Heart left ventricle (tissue), 16 donors: ENCODE measurements at regions of chr7 and their contacts with region 1.

Region 1: DNA sequence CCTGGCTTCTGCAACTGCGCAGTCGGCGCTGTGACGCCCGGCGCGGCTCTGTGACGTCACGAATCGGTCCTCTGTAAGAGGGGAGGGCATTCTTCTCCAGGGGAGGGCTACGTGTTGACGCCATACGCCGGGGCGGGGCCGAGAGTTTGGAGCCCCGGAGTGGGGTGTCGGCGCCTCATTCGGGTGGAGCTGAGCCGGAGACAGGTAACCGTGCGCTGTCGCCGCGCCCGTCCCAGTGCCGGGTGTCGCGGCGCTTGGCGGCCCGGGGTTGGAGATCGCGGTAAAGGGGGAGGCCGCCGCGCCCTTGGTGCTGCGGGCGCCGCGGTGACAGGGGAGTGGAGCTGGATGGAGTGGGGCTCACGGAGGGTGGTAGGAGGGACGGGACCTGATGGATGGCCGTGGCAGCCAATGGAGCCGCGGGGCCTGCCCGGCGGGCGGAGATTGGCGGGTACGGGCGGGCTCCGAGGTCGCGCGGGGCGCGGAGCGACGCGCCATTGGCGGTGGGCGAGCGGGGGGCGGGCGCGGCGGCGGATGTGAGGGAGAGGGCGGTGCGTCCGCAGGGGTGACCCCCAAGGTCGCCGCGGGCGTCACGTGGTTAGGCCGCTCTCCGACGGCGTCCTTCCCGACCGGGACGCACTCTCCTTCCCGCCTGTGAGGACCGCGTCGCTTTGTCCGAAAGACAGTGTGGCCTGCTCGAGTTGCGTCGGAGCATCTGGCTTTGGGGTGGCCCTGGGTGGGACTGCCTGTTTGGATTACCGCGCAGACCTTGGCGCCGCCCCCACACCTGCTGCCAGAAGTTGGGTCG is at the start of gene OGDH:
- DNase-seq: peak; percentile 99 to 100 (median 99)
- ATAC-seq: peak; percentile 94 to 99 (median 96)
- H3K4me3 ChIP-seq: peak within 1 kb of the TSS; percentile 47 to 93 (median 75)
- H3K27ac ChIP-seq: peak within 1 kb of the TSS; percentile 93 to 99 (median 98)
- H3K4me1 ChIP-seq: peaks cover 0 to 33% (median 23%) of the 10 kb centered on the region in 12 donors
- H3K27me3 ChIP-seq: no peaks in the 10 kb centered on the region
- CTCF ChIP-seq: no peak
- POLR2A ChIP-seq: peak; percentile 85 to 96
- total RNA-seq, gene OGDH: 394 to 789 (median 635) TPM

Region 2: GRCh38 chr7:44131173-44132029 is 475.3 kb before region 1 on chr7:
- intact Hi-C with region 1: no loop called
- DNase-seq: peak in 2 of 5 donors; percentile 38 to 63
- ATAC-seq: peak; percentile 45 to 79 (median 68)
- H3K4me3 ChIP-seq: no peak overlapping the region
- H3K27ac ChIP-seq: peak overlapping the region; percentile 1 to 89 (median 70)
- H3K4me1 ChIP-seq: peaks cover 0 to 39% (median 10%) of the 10 kb centered on the region in 12 donors
- H3K27me3 ChIP-seq: no peaks in the 10 kb centered on the region
- CTCF ChIP-seq: peak in 10 of 12 donors; percentile 22 to 52 (median 35)
- POLR2A ChIP-seq: no peak

Region 3: DNA sequence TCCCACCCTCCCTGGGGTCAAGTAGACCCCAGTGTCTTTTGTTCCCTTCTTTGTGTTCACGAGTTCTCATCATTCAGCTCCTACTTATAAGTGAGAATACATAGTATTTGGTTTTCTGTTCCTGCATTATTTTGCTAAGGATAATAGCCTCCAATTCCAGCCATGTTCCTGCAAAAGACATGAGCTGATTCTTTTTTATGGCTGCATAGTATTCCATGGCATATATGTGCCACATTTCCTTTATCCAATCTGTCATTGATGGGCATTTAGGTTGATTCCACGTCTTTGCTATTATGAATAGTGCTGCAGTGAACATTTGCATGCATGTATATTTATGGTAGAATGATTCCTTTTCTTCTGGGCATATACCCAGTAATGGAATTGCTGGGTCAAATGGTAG is 253.0 kb before region 1 on chr7:
- intact Hi-C with region 1: no loop called
- DNase-seq: no peak
- ATAC-seq: no peak
- H3K4me3 ChIP-seq: no peak overlapping the region
- H3K27ac ChIP-seq: no peak overlapping the region
- H3K4me1 ChIP-seq: peaks cover 0 to 7% (median 0%) of the 10 kb centered on the region in 12 donors
- H3K27me3 ChIP-seq: peaks cover 0 to 6% (median 0%) of the 10 kb centered on the region in 9 donors
- CTCF ChIP-seq: no peak
- POLR2A ChIP-seq: no peak

Region 4: DNA sequence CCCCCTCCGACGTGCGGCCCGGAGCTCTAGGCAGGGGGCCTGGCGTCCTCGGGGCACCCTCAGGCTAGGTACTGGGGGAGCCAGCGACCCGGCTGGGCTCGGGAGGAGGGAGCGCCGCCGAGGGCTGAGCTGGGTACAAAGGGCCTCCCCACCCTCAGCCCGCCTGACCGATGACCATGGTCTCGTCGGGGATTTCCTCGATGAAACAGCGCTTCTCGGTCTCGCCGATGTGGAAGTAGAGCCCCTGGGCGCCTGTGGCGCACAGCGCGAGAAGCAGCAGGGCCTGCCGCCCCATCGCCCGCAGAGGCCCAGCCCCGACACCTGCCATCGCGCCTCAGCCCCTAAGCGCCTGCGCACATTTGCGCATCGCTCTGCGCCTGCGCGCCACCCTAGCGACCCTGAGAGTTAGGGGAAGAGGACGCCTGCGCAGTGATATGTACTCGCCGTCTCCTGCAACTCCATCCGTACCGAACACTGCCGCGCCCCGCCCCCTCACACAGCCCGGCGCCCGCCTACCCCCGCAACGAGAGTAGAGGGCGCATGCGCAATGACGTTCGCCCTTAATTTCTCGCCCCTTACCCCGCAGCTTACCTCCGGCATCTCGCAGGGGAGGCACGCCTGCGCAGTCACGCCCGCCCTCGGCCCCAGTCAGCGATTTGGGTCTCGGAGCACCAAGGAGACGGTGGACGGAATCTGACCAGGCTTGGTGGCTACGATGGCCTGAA is 24.6 kb before region 1 on chr7 and contains the start of gene TMED4:
- intact Hi-C with region 1: loop called in 2 of 10 experiments (anchors 1 kb)
- DNase-seq: peak; percentile 100
- ATAC-seq: peak; percentile 98 to 99 (median 98)
- H3K4me3 ChIP-seq: peak within 1 kb of the TSS; percentile 64 to 98 (median 82)
- H3K27ac ChIP-seq: peak within 1 kb of the TSS; percentile 92 to 99 (median 98)
- H3K4me1 ChIP-seq: peaks cover 5 to 29% (median 22%) of the 10 kb centered on the region in 12 donors
- H3K27me3 ChIP-seq: no peaks in the 10 kb centered on the region
- CTCF ChIP-seq: peak in 1 of 12 donors; percentile 11
- POLR2A ChIP-seq: peak in 1 of 2 donors; percentile 80
- total RNA-seq, gene TMED4: 55.4 to 129 (median 68.9) TPM

Region 5: DNA sequence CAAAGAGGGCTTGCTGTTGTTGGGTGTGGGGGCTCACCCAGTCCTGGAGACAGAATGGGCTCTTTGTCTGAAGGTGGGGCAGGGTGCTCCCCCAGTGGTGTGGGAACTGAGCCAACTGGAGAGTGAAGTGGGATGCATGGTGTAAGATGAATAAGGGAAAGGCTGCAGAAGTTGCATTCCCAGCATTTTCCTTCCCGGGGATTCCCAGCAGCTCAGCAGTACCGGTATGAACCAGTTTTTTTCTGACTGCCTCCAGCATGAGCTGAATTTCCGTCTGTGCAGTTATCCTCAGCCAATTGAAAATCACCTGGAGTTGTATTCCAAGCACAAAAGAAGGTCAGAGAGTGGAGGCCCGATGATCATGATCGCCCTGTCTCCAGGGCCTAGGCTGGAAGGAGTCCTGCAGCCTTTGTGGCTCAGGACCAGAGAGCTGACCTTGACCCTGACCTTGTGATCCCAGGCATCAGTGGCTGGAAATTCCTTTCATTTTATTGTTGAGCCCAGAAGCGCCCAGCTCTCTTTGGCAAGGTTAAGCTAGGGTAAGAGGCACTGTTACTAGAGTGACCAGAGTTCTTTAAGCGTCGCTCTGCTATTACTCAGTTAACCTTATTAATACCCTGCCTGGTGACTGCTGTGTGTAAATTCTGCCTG is 33.1 kb after region 1 on chr7:
- intact Hi-C with region 1: loop called in 2 of 10 experiments (anchors 2 to 5 kb)
- DNase-seq: peak in 2 of 5 donors; percentile 42 to 52
- ATAC-seq: peak; percentile 23 to 57 (median 46)
- H3K4me3 ChIP-seq: no peak overlapping the region
- H3K27ac ChIP-seq: peak overlapping the region; percentile 48 to 97 (median 86)
- H3K4me1 ChIP-seq: peaks cover 9 to 82% (median 66%) of the 10 kb centered on the region in 12 donors
- H3K27me3 ChIP-seq: no peaks in the 10 kb centered on the region
- CTCF ChIP-seq: no peak
- POLR2A ChIP-seq: no peak

Region 6: DNA sequence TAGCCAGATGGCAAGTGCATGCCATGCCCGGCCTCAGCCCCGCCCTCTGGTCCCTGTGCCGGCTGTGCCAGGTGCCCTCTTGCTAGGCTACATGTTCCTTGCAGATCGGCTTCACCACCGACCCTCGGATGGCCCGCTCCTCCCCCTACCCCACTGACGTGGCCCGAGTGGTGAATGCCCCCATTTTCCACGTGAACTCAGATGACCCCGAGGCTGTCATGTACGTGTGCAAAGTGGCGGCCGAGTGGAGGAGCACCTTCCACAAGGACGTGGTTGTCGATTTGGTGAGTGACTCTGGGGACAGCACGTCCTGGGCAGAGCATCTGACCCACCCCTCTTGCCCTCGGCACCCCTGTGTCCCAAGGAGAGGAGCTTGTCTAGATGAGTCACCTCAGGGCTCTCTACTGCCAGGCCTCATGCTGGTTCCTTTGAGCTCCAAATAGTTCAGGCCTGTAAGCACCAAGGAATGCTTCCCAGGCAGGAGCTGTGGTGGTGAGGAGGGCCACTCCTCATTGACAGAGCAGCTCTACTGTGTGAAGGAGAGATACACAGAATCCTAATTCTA is 87.2 kb after region 1 on chr7:
- intact Hi-C with region 1: loop called in 2 of 10 experiments (anchors 5 kb)
- DNase-seq: peak; percentile 43 to 94 (median 76)
- ATAC-seq: peak; percentile 95 to 97 (median 96)
- H3K4me3 ChIP-seq: no peak overlapping the region
- H3K27ac ChIP-seq: peak overlapping the region; percentile 9 to 89 (median 70)
- H3K4me1 ChIP-seq: peaks cover 0 to 16% (median 2%) of the 10 kb centered on the region in 12 donors
- H3K27me3 ChIP-seq: no peaks in the 10 kb centered on the region
- CTCF ChIP-seq: no peak
- POLR2A ChIP-seq: peak in 1 of 2 donors; percentile 43

Region 7: DNA sequence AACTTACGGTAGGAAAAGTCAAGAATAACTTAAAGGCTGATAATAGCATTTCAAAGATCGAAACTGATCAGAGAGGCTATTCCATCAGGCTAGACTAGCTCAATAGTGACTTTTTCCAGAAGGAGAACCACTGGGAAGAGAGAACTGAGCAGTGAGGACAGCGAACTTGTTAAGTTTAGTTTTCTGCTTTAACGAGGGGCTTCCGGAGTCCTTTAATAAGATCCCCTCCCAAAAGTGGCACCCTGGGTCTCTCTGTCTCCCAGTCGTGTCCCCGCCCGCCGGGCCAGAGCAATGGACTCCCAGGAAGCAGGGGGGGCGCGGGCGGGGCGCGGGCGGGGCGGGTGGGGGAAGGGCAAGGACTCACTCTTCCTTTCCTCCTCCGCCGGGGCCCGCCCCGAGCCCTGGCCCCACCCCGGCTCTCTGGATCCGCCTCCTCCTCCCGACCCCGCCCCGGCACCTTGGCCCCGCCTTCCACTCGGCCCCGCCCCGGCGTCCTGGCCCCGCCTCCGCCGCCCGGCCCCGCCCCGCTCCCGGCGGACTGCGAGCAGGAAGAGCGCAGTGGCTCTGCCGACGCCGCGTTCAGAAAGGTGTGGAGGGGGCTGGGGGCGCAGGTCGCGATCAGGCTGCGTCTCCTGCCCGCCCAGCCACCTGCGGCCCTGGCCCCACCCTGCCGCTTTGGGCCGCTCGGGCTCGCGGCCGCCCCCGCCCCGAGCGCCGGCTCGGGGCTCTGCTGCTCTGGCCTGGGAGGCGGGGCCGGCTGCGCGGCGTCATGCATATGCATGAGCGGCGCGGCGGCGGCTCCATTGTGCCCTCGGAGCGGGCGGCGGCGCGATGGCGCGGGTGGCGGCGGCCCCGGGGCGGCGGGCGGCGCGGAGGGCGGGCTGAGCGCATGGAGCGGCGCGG is 141.6 kb after region 1 on chr7 and contains the start of gene ZMIZ2:
- intact Hi-C with region 1: loop called in 6 of 10 experiments (anchors 1 to 10 kb)
- DNase-seq: peak; percentile 94 to 98 (median 96)
- ATAC-seq: peak; percentile 95 to 99 (median 98)
- H3K4me3 ChIP-seq: peak within 1 kb of the TSS; percentile 83 to 98 (median 92)
- H3K27ac ChIP-seq: peak within 1 kb of the TSS; percentile 92 to 100 (median 96)
- H3K4me1 ChIP-seq: peaks cover 6 to 49% (median 28%) of the 10 kb centered on the region in 12 donors
- H3K27me3 ChIP-seq: no peaks in the 10 kb centered on the region
- CTCF ChIP-seq: no peak
- POLR2A ChIP-seq: peak; percentile 12 to 80
- total RNA-seq, gene ZMIZ2: 18.5 to 71.5 (median 46.5) TPM

Region 8: DNA sequence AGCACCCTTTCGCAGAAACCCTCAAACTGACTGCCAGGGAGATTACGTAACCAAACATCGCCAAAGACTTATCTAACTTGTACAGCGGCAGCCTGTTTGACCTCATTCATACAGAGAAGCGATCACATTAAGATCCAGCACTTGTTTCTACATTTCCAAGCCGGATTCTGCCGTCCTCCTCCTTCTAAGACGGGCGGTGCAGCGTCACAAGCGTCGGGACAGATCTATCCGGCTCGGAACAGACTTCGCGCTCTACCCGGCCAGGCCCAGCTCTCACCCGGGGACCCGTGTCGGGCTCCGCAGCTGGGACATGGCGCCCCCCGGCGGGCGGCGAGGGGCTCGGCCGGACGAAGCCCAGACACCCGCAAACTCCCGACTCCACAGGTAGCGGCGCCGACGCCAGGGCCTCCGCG is 240.9 kb after region 1 on chr7:
- intact Hi-C with region 1: loop called in 4 of 10 experiments (anchors 1 to 5 kb)
- DNase-seq: peak; percentile 89 to 95 (median 89)
- ATAC-seq: peak; percentile 23 to 87 (median 75)
- H3K4me3 ChIP-seq: peak overlapping the region; percentile 52 to 85 (median 70)
- H3K27ac ChIP-seq: peak overlapping the region; percentile 70 to 99 (median 97)
- H3K4me1 ChIP-seq: peaks cover 0 to 46% (median 38%) of the 10 kb centered on the region in 12 donors
- H3K27me3 ChIP-seq: no peaks in the 10 kb centered on the region
- CTCF ChIP-seq: peak; percentile 80 to 99 (median 94)
- POLR2A ChIP-seq: no peak